ENCODE measurements at regions of chr4 and their contacts with region 1.

Region 1: GRCh38 chr4:10554694-10555093 is 97.5 kb upstream of the ZNF518B start:
- DNase-seq: peak; percentile 57
- CTCF ChIP-seq: peak; percentile 71

Region 2: DNA sequence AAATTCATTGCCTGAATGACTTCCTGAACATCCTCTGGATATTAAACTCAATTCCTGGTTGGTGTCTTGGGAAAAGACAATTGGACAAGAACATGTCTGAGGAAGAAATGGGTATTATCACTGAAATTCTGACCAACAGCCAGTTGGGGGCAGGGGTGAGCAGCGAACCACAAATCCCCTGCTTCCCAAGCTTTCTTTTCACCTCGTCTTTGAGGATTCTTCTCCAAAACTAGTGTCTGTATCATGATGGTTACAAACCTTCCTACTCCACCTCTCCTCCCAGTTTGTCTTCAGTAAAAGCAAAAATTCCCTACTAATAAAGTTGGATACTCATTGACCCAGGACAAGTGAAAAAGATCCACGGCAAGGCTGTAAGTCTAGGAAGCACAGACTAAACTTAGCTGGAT is 389.8 kb before region 1 on chr4:
- in situ Hi-C with region 1: loop called (anchors 10 kb)
- DNase-seq: peak; percentile 31
- CTCF ChIP-seq: peak; percentile 47

Region 3: DNA sequence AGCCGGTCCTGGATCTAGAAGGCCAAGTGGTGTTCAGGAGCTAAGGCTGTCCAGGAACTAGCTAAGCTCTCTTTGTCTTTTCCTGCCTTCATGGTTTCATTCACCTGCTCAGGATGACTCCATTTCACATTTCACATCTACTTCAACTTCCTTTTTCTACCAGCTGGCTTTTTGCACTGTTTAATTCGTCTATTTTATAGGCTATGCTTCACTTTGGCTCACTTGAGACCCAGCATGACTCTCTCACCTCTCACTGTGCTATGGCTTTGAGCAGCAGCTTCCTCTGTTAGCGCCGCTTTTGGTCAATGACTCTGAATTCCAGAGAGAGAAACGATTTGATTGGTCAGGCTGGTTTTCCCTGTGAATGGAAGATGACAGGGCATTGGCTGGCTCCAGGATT is 343.4 kb after region 1 on chr4:
- in situ Hi-C with region 1: no loop called
- DNase-seq: no peak
- CTCF ChIP-seq: no peak